H1 (cell line): ENCODE measurements at regions of chr7 and their contacts with region 1.

Region 1: DNA sequence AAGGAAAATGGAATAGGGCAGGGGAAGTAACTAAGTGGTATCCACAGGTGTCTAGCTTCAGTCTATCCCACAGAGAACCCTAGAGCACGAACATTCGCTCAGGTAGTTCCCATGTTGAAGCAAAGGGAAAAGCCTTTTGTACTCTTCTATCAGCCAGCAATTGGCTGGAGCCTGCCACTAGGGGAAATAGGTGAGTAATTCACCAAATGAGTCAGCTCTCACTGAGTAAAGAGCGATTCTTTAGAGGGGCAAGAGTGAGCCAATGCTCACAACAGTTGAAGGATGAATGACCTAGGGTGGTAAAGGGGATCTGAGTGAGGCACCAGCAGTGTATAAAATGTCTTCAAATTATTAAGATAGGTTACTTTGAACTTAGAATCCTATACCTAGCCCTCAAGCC is 94.1 kb upstream of the ZNF800 start:
- DNase-seq: no peak
- H3K4me3 ChIP-seq: no peak overlapping the region
- H3K27ac ChIP-seq: no peak overlapping the region; the same call in 1 of the 2 replicates
- H3K4me1 ChIP-seq: peaks cover 0 to 2% (median 0%) of the 10 kb centered on the region in 4 experiments; a peak in 1 of 7 replicates
- H3K27me3 ChIP-seq: no peaks in the 10 kb centered on the region
- CTCF ChIP-seq: peak in 1 of 3 experiments; percentile 34; a peak in 1 of 4 replicates
- EP300 ChIP-seq: no peak
- POLR2A ChIP-seq: no peak
- RAD21 ChIP-seq: no peak

Region 2: DNA sequence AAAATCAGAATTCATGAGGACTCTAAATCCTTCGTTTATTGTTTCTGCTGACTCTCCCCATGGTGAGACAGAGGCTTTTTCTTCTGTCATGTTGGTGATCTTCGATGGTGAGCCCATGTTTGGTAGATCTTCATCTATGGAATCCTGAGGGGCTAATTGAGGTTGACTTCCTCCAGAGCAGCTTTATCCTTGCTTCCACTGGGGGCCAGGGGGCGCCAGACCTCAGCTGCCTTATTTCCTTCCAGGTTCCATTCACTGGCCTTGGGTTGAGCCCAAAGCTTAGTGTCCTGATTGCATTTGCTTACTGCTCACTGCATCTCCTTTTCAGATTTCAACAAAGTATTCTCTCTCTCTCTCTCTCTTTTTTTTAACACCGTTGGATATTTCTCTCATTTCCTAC is 18.1 kb after region 1 on chr7:
- CTCF ChIA-PET with region 1: interaction called, 11 read pairs
- POLR2A ChIA-PET with region 1: no interaction called
- DNase-seq: peak; percentile 23 to 74
- H3K4me3 ChIP-seq: no peak overlapping the region
- H3K27ac ChIP-seq: no peak overlapping the region
- H3K4me1 ChIP-seq: no peaks in the 10 kb centered on the region
- H3K27me3 ChIP-seq: peaks cover 0 to 2% (median under 1%) of the 10 kb centered on the region in 4 experiments; a peak in 2 of 7 replicates
- CTCF ChIP-seq: peak; percentile 80 to 85 (median 81)
- EP300 ChIP-seq: no peak
- POLR2A ChIP-seq: no peak
- RAD21 ChIP-seq: peak; percentile 68 to 73